SK-N-SH (cell line): ENCODE measurements at regions of chr9 and their contacts with region 1.

Region 1: DNA sequence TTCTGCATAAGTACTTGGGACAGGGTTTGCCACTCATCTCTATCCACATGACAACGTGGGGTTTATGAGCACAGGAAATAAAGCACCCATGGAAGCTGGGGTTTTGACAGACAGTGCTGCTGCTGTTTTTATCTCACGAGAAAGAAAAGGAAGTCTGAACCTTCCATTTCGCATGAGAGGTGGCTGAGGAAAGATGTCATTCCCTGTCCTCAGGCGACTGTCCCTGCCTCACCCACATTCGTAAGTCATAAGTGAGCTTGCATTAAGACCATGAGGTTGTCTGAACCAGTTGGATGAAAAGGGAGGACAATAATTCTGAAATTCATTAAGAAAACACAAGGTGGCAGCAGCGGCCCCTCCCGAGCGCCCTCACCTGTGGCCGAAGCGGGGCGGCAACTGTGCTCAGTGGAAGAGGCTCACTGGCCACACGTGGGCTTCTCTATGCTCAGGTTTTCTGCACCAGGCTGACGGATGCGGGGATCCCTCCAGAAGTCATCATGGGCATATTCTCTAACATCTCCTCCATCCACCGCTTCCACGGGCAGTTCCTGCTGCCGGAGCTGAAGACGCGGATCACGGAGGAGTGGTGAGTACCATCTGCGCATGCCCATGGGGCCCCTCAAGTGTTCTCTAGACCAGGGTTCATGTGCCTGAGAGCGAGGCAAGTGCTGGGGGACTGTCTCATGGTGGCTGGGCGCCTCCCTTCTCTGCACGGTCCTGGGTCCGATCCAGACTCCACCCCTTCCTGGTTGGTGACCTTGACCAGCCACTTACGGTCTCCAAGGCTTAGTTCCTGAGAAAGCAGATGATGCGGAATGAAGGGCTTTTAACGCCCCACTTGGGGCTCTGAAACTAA is 54.7 kb upstream of the SUSD3 start:
- DNase-seq: peak; percentile 73
- H3K4me3 ChIP-seq: no peak overlapping the region
- H3K27ac ChIP-seq: no peak overlapping the region
- H3K4me1 ChIP-seq: peaks cover 0 to 5% of the 10 kb centered on the region in 2 experiments; a peak in 1 of 4 replicates
- H3K27me3 ChIP-seq: no peaks in the 10 kb centered on the region
- CTCF ChIP-seq: peak; percentile 65
- EP300 ChIP-seq: no peak
- RAD21 ChIP-seq: peak; percentile 83

Region 2: DNA sequence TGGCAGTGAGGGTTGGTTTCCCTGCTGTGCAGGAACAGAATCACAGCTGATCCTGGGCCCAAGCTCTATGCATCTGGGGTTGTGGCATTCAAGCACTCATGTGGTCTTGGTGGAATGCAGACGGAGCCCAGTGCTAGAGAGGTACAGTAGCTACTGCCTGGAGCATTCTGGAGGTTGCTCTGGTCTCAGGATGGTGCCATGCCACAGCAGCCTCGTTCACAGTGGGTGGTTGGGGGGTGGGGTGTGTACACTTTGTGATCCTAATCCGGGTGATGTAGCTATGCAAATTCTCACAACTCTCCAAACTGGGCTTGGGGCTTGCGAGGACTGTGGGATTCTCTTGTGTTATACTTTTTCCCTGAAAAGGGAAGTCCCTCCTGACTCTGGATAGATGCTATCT is 11.2 kb before region 1 on chr9:
- CTCF ChIA-PET with region 1: interaction called, 16 read pairs
- POLR2A ChIA-PET with region 1: no interaction called
- DNase-seq: no peak
- H3K4me3 ChIP-seq: no peak overlapping the region
- H3K27ac ChIP-seq: no peak overlapping the region
- H3K4me1 ChIP-seq: no peaks in the 10 kb centered on the region; a peak in 1 of 4 replicates
- H3K27me3 ChIP-seq: no peaks in the 10 kb centered on the region
- CTCF ChIP-seq: no peak
- EP300 ChIP-seq: no peak
- RAD21 ChIP-seq: no peak

Region 3: DNA sequence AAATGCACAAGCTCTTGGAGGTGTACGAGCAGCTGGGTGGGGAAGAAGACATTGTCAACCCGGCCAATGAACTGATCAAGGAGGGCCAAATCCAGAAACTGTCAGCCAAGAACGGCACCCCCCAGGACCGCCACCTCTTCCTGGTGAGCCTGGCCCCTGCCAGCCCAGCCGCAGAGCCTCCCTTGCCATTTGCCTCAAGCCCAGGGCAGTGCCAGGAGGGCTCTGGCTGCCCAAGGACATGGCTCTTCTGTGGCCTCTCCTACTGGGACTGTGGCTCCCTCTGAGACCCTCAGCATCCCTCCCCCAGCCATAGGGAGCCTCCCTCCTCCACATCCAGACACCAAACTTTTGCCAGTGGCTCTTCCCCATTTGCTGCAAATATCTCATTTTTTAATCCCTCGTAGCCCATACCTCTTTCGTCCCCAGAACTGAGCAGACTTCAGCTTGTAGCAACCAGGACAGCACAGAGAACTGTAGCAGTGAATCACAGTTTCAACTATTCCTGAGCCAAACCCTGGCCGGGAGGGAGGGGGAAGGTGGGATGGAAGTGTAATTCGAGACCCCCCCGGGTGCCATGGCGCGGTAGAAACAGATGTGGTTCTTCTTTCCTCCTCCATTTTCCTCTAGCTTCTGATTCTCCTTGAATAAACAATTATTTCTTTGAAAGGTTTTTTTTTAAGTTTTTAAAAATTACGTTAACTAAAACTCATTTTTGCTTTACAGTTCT is 10.2 kb after region 1 on chr9:
- CTCF ChIA-PET with region 1: interaction called, 18 read pairs
- POLR2A ChIA-PET with region 1: no interaction called
- DNase-seq: peak; percentile 11
- H3K4me3 ChIP-seq: no peak overlapping the region
- H3K27ac ChIP-seq: no peak overlapping the region
- H3K4me1 ChIP-seq: peaks cover 0 to 15% of the 10 kb centered on the region in 2 experiments; a peak in 1 of 4 replicates
- H3K27me3 ChIP-seq: no peaks in the 10 kb centered on the region
- CTCF ChIP-seq: no peak
- EP300 ChIP-seq: no peak
- RAD21 ChIP-seq: no peak

Region 4: GRCh38 chr9:93020771-93021670 is 17.2 kb after region 1 on chr9:
- CTCF ChIA-PET with region 1: interaction called, 13 read pairs
- POLR2A ChIA-PET with region 1: no interaction called
- DNase-seq: no peak
- H3K4me3 ChIP-seq: no peak overlapping the region
- H3K27ac ChIP-seq: no peak overlapping the region
- H3K4me1 ChIP-seq: peaks cover 0 to 19% of the 10 kb centered on the region in 2 experiments; a peak in 1 of 4 replicates
- H3K27me3 ChIP-seq: no peaks in the 10 kb centered on the region
- CTCF ChIP-seq: no peak
- EP300 ChIP-seq: no peak
- RAD21 ChIP-seq: no peak

Region 5: DNA sequence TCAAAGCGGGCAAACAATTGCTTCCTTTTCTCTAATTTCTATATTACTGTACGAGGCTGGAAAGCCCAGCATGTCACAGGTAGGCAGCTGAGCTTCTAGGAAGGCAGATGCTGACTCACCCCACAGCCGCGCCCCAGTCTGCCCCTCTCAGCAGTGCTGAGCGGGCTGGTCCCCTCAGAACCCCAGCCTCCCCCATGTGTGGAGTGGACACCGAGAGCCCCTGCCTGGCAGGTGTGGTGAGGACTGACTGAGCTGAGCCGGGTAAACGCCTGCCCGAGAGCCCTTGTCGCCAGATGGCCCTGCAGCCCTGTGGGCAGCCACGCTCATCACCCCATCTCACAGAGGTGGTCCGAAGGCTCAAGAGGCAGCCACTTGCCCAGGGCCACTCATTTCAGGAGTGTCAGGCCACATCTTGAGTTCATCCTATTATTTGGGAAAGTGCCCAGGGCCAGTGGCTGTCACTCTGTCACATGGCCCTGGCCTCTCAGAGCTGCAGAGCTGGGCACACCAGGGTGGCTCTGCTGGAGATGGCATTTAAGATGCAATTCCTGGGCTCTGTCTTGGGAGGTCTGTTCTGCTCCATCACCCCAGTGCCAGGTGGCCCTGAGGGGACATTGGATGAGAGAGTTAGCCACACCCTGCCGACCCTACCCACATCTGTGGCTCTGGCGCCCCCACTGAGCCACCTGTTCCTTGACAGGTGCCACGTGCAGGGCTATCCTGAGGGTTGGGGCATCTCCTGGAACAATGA is 104.7 kb after region 1 on chr9:
- CTCF ChIA-PET with region 1: interaction called, 48 read pairs
- POLR2A ChIA-PET with region 1: no interaction called
- DNase-seq: no peak
- H3K4me3 ChIP-seq: no peak overlapping the region
- H3K27ac ChIP-seq: no peak overlapping the region; a peak in 1 of 4 replicates
- H3K4me1 ChIP-seq: peaks cover 0 to 9% of the 10 kb centered on the region in 2 experiments; a peak in 1 of 4 replicates
- H3K27me3 ChIP-seq: no peaks in the 10 kb centered on the region
- CTCF ChIP-seq: no peak
- EP300 ChIP-seq: no peak
- RAD21 ChIP-seq: no peak

Region 6: DNA sequence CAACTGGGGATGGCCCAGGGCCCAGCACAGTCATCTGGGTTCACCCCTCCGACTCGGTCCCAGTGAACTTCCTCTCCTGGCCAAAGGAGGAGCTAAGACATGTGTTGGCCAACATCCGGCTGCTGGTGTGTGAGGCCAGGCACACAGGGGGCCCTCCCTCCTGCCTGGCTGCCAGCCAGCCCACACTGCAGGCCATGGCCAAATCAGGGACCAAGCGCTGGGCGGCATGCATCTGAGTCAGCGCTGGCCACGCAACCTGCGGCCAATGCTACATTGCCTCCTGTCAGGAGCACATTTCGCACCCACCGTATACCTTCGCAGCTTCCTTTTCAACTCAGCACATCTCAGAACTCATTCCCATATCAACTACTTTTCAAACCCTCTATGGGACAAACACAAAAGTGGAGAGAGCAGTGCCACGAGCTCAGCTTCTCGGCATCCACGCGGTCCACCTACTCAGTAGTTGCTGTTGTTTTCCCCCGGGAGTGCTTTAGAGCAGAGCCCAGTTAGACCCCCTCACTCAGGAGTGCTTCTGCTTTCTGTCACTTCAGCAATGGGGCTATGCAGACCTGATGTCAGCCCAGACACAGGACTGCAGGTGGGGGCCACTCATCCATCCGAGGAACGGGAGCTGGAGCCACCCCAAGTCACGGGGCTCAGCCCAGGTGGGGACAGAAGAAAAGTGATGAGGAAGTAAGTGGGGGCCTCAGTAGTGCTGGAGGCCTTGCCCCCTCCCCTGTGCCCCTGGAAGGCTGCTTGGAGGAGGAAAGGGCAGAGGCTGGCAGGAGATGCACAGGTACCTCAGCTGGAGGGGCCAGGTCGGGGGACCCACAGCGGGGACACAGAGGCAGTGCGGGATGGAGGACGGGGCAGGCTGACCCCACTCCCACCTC is 116.4 kb after region 1 on chr9:
- CTCF ChIA-PET with region 1: interaction called, 15 read pairs
- POLR2A ChIA-PET with region 1: no interaction called
- DNase-seq: peak; percentile 94
- H3K4me3 ChIP-seq: no peak overlapping the region
- H3K27ac ChIP-seq: peak overlapping the region; percentile 41 to 79
- H3K4me1 ChIP-seq: peaks cover 0 to 15% of the 10 kb centered on the region in 2 experiments; a peak in 2 of 4 replicates
- H3K27me3 ChIP-seq: no peaks in the 10 kb centered on the region
- CTCF ChIP-seq: peak; percentile 37
- EP300 ChIP-seq: peak; percentile 36 to 56; a peak in 2 of 4 replicates
- RAD21 ChIP-seq: peak; percentile 46

Region 7: DNA sequence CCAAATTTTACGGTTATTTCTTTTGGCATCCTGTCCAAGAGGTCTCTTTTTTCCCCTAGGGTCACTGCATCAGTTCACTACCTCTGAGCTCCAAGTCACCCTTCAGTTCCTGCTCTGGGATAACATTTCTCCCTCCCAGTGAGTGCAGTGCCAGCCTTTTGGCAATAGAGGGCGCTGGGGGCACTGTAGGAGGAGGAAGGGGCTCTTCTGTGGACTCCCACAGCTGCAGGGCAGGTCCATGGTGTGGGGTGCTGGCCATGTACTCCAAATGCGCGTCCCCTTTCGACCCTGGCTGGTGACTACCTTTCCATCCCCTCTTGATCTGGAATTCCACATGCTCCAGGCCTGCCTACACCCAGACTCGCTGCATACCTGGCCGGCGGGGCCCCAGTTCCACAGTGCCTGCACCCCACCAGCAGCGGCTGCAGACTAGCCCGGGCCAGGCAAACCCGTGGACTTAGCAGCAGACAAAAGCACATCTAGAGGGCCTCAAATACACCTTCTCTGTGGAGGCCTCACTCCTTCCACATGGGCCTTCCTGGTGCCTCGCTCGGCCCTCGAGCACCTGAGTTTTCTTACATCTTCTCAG is 150.6 kb after region 1 on chr9:
- CTCF ChIA-PET with region 1: interaction called, 13 read pairs
- POLR2A ChIA-PET with region 1: no interaction called
- DNase-seq: peak; percentile 80
- H3K4me3 ChIP-seq: no peak overlapping the region
- H3K27ac ChIP-seq: no peak overlapping the region
- H3K4me1 ChIP-seq: peaks cover 0 to 11% of the 10 kb centered on the region in 2 experiments; a peak in 1 of 4 replicates
- H3K27me3 ChIP-seq: no peaks in the 10 kb centered on the region
- CTCF ChIP-seq: peak; percentile 66
- EP300 ChIP-seq: no peak
- RAD21 ChIP-seq: peak; percentile 61